Dorsolateral prefrontal cortex (tissue), 120 donors: ENCODE measurements at regions of chr16 and their contacts with region 1.

Region 1: DNA sequence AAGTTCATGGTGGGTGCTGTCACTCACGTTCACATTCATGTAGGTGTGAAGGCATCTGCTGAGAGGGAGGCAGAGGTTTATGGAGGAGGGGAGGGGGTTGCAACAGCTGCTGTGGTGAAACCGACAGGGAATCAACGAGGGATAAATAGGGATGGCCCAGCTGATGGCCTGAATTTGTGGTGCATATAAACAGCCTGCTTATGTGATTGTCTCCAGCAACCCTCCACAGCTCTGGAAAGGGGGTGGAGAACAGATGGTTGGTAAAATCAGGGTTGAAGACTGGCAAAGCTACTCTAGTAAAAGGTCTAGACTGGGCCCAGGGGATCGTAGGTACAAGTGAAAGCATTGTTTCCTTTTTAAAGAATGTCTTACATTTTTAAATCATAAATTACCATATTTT is 53.7 kb downstream of the IQCK start:
- DNase-seq: peak in 1 of 10 donors; percentile 56
- H3K4me3 ChIP-seq: no peak overlapping the region
- H3K27ac ChIP-seq: peak overlapping the region in 55 of 59 donors; percentile 28 to 84 (median 69)
- H3K27me3 ChIP-seq: no peaks in the 10 kb centered on the region
- CTCF ChIP-seq: no peak

Region 2: DNA sequence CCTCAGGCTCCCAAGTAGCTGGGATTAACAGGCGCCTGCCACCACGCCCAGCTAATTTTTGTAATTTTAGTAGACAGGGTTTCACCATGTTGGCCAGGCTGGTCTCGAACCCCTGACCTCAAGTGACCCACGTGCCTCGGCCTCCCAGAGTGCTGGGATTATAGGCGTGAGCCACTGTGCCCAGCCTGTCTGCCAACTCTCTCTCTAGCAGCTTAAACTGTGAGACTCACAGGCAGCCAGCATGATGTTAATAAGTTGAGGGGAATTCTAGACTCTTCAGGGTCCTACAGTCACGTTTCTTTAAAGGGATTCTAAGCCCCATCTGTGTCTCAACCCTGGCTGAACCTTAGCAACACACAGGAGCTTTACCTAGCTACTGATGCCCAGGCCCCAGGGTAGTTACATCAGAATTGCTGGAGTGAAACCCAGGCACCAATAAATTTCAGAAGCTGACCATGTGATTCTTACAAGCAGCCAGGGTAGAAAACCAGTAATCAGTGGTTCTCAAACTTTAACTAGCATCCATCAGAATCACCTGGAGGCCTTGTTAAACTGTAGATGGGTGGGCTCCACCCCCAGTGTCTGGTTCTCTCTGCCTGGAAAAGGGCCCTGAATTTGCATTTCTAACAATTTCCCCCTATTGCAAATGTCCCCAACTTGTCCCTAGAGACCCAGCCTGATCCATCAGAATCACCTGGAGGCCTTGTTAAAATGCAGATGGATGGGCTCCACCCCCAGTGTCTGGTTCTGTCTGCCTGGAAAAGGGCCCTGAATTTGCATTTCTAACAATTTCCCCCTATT is 82.1 kb after region 1 on chr16:
- intact Hi-C with region 1: loop called (anchors 5 kb)
- DNase-seq: peak in 2 of 10 donors; percentile 33 to 42
- H3K4me3 ChIP-seq: no peak overlapping the region
- H3K27ac ChIP-seq: peak overlapping the region in 58 of 59 donors; percentile 11 to 99 (median 95)
- H3K27me3 ChIP-seq: no peaks in the 10 kb centered on the region
- CTCF ChIP-seq: no peak

Region 3: GRCh38 chr16:19874026-19874425 is 102.2 kb after region 1 on chr16:
- intact Hi-C with region 1: no loop called
- DNase-seq: peak in 4 of 10 donors; percentile 54 to 65 (median 59)
- H3K4me3 ChIP-seq: peak overlapping the region in 18 of 59 donors; percentile 2 to 91 (median 22)
- H3K27ac ChIP-seq: peak overlapping the region; percentile 65 to 99 (median 97)
- H3K27me3 ChIP-seq: no peaks in the 10 kb centered on the region
- CTCF ChIP-seq: no peak